Panc1 (cell line): ENCODE measurements at regions of chr10 and their contacts with region 1.

Region 1: DNA sequence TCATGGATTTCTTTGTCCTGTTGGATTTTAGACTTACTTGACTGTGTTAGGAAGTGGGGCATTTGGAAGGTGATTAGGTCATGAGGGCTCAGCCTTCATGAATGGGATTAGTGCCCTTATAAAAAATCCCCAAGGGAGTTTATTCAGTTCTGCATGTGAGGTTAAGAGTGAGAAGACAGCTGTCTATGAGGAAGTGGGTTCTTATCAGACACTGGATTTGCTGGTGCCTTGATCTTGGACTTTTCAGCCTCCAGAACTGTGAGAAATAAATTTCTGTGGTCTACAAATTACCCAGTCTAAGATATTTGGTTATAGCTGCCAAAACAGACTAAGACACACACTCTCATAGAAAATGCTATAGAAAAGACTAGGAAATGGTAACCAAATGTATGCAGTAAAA is 724.7 kb upstream of the FZD8 start:
- DNase-seq: no peak
- ATAC-seq: no peak
- H3K4me3 ChIP-seq: no peak overlapping the region
- H3K27ac ChIP-seq: no peak overlapping the region
- H3K4me1 ChIP-seq: no peaks in the 10 kb centered on the region
- H3K27me3 ChIP-seq: no peaks in the 10 kb centered on the region
- CTCF ChIP-seq: no peak

Region 2: DNA sequence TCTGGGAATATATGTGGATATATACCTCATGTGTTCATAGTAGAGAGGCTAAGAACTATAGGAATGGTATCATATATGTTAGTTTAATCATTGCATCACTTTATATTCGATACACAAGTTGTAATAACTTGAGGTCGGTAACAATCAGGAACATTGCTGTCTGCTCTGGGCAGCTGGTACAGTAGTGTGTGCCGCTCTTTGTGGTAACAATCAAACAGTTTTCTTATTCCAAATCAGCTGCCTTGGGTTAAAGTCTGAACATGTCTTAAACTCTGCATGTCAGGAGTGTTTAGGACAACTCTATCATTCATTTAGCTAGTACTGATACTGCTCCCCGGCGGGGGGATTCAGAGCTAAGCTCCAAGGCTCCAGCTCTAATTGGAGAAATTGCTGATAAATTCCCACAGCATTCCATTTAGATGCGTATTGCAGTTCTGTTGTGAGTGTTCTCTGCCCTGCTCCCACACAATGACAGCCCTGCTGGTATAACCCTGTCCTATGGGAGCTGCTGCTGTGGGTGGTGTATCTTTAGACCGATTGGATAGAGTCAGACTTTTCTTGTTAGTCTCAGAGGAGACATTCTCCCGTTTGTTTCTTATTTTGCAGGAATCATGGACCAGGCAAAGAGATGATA is 17.3 kb before region 1 on chr10:
- CTCF ChIA-PET with region 1: no interaction called
- POLR2A ChIA-PET with region 1: no interaction called
- in situ Hi-C with region 1: no loop called
- intact Hi-C with region 1: loop called (anchors 2 kb)
- DNase-seq: no peak
- ATAC-seq: no peak
- H3K4me3 ChIP-seq: no peak overlapping the region
- H3K27ac ChIP-seq: no peak overlapping the region
- H3K4me1 ChIP-seq: no peaks in the 10 kb centered on the region
- H3K27me3 ChIP-seq: no peaks in the 10 kb centered on the region
- CTCF ChIP-seq: no peak

Region 3: GRCh38 chr10:38054361-38054797 is 1687.5 kb after region 1 on chr10:
- CTCF ChIA-PET with region 1: no interaction called
- POLR2A ChIA-PET with region 1: no interaction called
- in situ Hi-C with region 1: no loop called
- intact Hi-C with region 1: no loop called
- DNase-seq: no peak
- ATAC-seq: no peak
- H3K4me3 ChIP-seq: no peak overlapping the region
- H3K27ac ChIP-seq: no peak overlapping the region
- H3K4me1 ChIP-seq: no peaks in the 10 kb centered on the region
- H3K27me3 ChIP-seq: no peaks in the 10 kb centered on the region
- CTCF ChIP-seq: no peak